ENCODE measurements at regions of chr10 and their contacts with region 1.

Region 1: DNA sequence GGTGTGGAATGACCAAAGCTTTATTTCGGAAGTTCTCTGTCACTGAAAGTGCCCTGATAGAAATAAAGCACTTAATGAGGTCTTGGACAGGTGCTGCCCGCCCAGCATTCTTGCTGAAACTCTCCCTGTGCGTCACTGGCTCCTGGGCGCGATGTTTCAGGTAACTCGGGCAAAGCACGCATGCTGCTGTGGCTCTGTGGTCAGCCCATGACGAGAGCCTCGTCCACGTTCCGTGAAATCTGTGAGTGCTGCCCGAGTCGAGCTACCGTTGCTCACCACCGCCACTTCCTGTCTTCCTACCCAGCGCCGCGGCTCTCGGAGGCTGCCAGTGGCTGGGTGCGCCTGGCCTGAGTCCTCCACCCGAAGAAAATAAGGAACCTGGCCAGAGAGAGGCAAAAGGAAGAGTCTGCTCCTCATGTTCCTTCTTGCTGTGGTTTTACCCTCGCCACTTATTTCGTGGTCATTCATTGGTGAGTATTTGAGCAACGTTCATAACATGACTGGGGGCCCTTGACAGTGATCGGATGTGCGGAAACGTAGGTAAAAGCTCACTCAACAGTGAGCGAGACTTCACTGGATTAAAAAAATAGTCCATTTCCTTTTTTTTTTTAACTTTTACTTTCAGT is 95.5 kb downstream of the MAP3K8 start:
- DNase-seq: peak; percentile 83 to 91 (median 87)
- H3K4me3 ChIP-seq: peak overlapping the region; percentile 48 to 56
- H3K4me3 Mint-ChIP-seq: peak overlapping the region; percentile 83 to 94 (median 88)
- H3K27ac ChIP-seq: peak overlapping the region; percentile 83
- H3K27ac Mint-ChIP-seq: peak overlapping the region; percentile 96 to 100 (median 98)
- H3K4me1 ChIP-seq: peaks cover 72% of the 10 kb centered on the region
- H3K4me1 Mint-ChIP-seq: peaks cover 38 to 73% (median 54%) of the 10 kb centered on the region in 4 donors
- H3K27me3 ChIP-seq: no peaks in the 10 kb centered on the region
- H3K27me3 Mint-ChIP-seq: no peaks in the 10 kb centered on the region

Region 2: DNA sequence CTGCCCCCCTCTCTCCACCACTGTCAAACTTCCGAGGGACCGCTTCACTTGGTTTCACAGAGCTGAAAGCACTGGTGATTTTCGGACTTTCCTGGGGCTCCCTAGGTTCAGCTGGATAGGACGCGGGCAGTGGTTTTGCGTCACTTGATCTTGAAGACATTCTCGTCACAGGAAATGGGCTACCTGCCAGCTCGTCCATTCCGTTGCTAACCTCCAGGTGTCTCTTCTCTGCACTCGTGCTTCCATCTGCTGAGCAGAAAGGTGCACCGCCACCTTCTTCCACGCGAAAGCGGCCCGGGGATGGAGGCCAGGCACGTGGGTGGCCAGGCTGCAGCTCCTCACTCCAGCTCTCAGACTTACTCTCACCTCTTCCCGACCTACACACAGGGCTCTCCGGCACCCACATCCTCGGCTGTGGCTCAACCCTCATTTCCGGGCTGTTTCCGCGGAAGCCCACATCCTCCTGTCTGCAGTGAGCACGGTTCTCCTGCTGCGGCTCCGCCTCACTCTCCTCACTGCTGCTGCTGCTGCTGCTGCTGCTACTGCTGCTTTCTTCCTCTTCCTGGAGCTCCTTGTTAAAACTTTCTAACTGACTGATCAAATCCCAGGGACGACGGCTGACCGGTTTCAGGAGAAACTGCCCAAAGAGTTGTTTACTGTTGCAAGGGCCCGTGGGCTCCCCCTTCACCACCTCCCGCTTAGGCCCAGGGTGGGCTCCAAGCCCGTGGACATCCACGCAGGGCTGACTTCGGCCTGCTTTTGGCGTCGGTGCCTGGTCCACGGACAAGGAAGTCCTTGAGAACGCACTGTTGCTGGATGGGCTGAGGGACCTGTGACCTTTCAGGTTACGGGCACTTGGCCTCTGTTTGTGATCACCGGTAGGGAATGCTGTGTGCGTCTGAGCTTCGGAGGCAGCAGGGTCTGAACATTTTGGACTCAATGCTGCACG is 502.2 kb before region 1 on chr10:
- CTCF ChIA-PET with region 1: no interaction called
- POLR2A ChIA-PET with region 1: no interaction called
- intact Hi-C with region 1: loop called (anchors 5 kb)
- DNase-seq: peak; percentile 91 to 98 (median 95)
- H3K4me3 ChIP-seq: peak overlapping the region; percentile 19 to 61
- H3K4me3 Mint-ChIP-seq: peak overlapping the region; percentile 69 to 91 (median 80)
- H3K27ac ChIP-seq: no peak overlapping the region
- H3K27ac Mint-ChIP-seq: peak overlapping the region; percentile 92 to 98 (median 94)
- H3K4me1 ChIP-seq: peaks cover 33% of the 10 kb centered on the region
- H3K4me1 Mint-ChIP-seq: peaks cover 20 to 47% (median 36%) of the 10 kb centered on the region in 4 donors
- H3K27me3 ChIP-seq: peaks cover 12% of the 10 kb centered on the region
- H3K27me3 Mint-ChIP-seq: peaks cover 33 to 36% of the 10 kb centered on the region in 2 donors

Region 3: DNA sequence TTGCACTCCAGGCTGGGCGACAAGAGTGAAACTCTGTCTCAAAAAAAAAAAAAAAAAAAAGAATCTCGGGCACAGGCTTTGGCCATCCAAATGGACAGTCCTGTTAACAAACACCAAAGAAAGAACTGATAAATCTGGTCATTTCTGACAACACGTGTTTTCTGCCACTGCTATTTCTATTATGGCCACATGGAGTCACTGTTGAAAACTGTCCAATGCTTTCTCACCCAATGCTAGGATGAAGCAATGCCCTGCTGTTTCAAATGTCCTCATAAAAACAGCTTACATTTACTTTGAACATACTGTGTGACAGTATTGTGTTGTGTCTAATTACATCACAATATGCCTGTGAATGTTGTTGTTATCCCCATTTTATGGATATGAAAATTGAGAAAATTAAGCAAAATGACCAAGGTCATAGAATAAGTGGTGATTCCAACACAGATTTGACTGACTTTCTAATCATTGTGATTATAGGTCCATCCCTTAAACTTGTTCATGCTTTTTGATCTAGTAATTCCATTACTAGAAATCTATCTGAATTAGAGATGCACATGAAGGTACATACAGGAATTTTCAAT is 115.4 kb before region 1 on chr10:
- CTCF ChIA-PET with region 1: interaction called, 133 read pairs
- POLR2A ChIA-PET with region 1: interaction called, 32 read pairs
- intact Hi-C with region 1: loop called (anchors 1 kb)
- DNase-seq: peak in 4 of 5 donors; percentile 46 to 53 (median 52)
- H3K4me3 ChIP-seq: no peak overlapping the region
- H3K4me3 Mint-ChIP-seq: no peak overlapping the region
- H3K27ac ChIP-seq: no peak overlapping the region
- H3K27ac Mint-ChIP-seq: no peak overlapping the region
- H3K4me1 ChIP-seq: peaks cover 15% of the 10 kb centered on the region
- H3K4me1 Mint-ChIP-seq: peaks cover 11 to 19% (median 16%) of the 10 kb centered on the region in 4 donors
- H3K27me3 ChIP-seq: no peaks in the 10 kb centered on the region
- H3K27me3 Mint-ChIP-seq: no peaks in the 10 kb centered on the region

Region 4: DNA sequence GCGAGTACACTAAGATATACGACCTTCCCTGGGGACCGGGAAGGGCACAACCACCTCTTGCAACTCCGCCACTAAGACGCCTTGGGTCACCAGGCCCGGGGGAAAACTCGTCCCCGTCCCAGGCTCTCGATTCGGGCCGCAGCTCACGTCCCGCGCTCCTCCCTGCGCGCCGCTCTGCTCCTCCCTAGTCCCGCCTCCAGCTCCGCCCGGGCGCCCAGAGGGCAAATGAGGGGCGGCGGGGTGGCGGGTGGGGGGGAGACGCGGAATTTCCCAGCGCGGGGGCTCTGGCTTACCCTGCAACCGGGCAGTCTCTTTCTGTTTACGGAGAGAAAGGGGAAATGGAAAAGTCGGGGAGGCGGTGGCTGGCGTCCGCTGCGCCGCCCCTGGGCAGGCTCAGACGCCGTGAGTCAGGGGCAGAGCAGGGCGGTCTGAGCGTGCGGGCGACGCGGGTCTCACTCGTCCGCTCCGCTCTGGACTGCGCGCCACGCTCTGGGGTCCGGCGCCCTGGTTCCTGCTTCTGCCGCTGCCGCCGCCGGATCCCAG is 95.7 kb before region 1 on chr10 and contains the start of gene MAP3K8:
- CTCF ChIA-PET with region 1: interaction called, 17 read pairs
- POLR2A ChIA-PET with region 1: interaction called, 79 read pairs
- intact Hi-C with region 1: loop called (anchors 1 kb)
- DNase-seq: peak; percentile 75 to 89 (median 79)
- H3K4me3 ChIP-seq: peak within 1 kb of the TSS; percentile 55 to 75
- H3K4me3 Mint-ChIP-seq: peak within 1 kb of the TSS; percentile 83 to 94 (median 92)
- H3K27ac ChIP-seq: peak within 1 kb of the TSS; percentile 88
- H3K27ac Mint-ChIP-seq: peak within 1 kb of the TSS; percentile 70 to 94 (median 91)
- H3K4me1 ChIP-seq: peaks cover 51% of the 10 kb centered on the region
- H3K4me1 Mint-ChIP-seq: peaks cover 37 to 55% (median 45%) of the 10 kb centered on the region in 4 donors
- H3K27me3 ChIP-seq: no peaks in the 10 kb centered on the region
- H3K27me3 Mint-ChIP-seq: no peaks in the 10 kb centered on the region
- total RNA-seq, gene MAP3K8: 5.5 to 6.5 TPM

Region 5: GRCh38 chr10:30493609-30494530 is 35.6 kb before region 1 on chr10:
- CTCF ChIA-PET with region 1: interaction called, 4 read pairs
- POLR2A ChIA-PET with region 1: interaction called, 16 read pairs
- intact Hi-C with region 1: loop called (anchors 5 kb)
- DNase-seq: no peak
- H3K4me3 ChIP-seq: no peak overlapping the region
- H3K4me3 Mint-ChIP-seq: peak overlapping the region in 3 of 8 donors; percentile 3 to 43 (median 19)
- H3K27ac ChIP-seq: no peak overlapping the region
- H3K27ac Mint-ChIP-seq: peak overlapping the region in 5 of 7 donors; percentile 1 to 63 (median 29)
- H3K4me1 ChIP-seq: peaks cover 61% of the 10 kb centered on the region
- H3K4me1 Mint-ChIP-seq: peaks cover 40 to 78% (median 65%) of the 10 kb centered on the region in 4 donors
- H3K27me3 ChIP-seq: no peaks in the 10 kb centered on the region
- H3K27me3 Mint-ChIP-seq: no peaks in the 10 kb centered on the region

Region 6: DNA sequence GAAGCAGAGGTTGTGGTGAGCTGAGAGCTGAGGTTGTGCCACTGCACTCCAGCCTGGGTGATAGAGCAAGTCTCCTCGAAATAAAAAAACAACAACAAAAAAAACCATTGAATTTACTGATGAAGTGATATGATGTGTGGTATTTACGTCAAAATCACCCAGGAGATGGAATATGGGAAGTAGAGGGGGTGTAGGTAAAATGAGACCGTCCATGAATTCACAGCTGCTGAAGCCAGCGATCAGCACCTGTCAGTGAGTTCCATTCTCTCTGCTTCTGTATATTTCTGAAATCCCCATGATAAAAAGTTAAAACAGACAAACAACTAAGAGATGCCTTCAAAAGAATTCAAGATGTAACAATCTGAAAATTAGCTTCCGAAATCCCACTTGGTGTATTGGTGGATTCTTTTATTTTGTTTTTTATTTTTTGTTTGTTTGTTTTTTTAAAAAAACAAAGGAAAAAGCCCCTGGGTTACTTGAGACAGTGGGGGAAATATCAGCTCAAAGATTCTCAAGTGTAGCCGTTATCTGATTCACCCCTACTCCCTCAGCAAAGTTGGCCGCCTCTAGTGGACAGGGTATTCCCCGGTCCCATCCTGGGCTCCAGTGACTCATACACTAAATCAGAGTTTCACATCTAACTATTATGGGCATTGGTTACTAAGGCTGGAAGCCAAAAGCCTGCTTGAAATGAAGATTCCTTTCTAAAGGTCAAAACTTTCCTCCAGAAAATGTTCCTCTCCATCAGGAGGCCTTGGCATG is 19.1 kb before region 1 on chr10:
- CTCF ChIA-PET with region 1: interaction called, 3 read pairs
- POLR2A ChIA-PET with region 1: interaction called, 16 read pairs
- intact Hi-C with region 1: no loop called
- DNase-seq: peak in 1 of 5 donors; percentile 64
- H3K4me3 ChIP-seq: no peak overlapping the region
- H3K4me3 Mint-ChIP-seq: no peak overlapping the region
- H3K27ac ChIP-seq: no peak overlapping the region
- H3K27ac Mint-ChIP-seq: no peak overlapping the region
- H3K4me1 ChIP-seq: no peaks in the 10 kb centered on the region
- H3K4me1 Mint-ChIP-seq: peaks cover 6 to 19% (median 7%) of the 10 kb centered on the region in 4 donors
- H3K27me3 ChIP-seq: no peaks in the 10 kb centered on the region
- H3K27me3 Mint-ChIP-seq: peaks cover 0 to 1% of the 10 kb centered on the region in 2 donors

Measured in CD4-positive, alpha-beta memory T cell (primary cell).